MCF 10A (cell line): ENCODE measurements at regions of chr19 and their contacts with region 1.

Region 1: DNA sequence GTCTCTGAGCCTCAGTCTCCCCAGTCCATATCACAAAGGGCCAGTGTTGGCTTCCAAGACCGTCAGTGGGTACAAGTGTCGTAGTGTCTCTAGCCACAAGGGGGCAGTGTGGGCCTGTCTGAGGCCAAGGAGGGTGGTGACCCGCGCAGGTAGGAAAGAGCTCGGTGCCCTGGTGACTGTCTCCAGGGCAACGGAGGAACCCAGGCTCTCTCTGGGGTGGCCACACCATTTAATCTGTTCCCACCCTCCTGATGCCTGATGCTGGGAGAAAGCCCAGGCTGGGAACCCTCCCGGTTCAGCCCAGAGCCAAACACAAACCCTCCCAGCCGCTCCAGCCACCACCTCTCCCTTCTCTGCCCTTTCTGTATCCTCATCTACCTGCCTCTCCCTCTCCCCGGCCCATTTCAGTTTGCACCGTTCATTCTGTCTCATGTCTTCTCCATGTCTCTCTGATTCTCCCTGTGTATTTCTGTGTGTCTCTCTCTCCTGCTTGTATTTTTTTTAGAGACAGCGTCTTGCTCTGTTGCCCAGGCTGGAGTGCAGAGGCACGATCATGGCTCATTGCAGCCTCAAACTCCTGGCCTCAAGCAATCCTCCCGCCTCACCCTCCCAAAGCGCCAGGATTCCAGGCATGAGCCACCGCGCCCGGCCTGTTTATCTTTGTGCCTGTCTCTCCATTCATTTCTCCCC is 17.5 kb upstream of the MEIS3 start:
- DNase-seq: peak; percentile 81
- H3K4me3 Mint-ChIP-seq: no peak overlapping the region
- H3K27ac Mint-ChIP-seq: no peak overlapping the region
- H3K4me1 Mint-ChIP-seq: no peaks in the 10 kb centered on the region
- H3K27me3 Mint-ChIP-seq: peaks cover 39% of the 10 kb centered on the region
- CTCF ChIP-seq: peak; percentile 91

Region 2: DNA sequence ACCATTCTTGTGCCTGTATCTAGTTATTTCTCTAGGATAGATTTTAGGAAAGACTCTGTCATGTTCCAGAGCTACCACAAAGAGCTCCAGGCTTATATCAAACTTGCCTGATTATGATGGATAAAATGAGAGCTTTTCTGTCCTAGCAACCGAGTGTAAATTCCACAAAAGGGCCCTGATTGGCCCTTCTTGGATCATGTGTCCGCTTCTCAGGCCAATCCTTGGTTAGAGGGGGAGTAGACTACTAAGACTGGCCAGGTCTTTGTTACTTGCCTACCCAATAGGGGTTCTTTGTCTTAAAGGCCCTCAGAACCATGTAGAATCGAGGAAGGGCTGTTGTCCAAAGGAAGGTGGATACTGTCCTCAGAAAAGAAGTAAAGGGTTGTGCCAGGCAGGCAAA is 85.3 kb before region 1 on chr19:
- CTCF ChIA-PET with region 1: no interaction called
- POLR2A ChIA-PET with region 1: no interaction called
- intact Hi-C with region 1: no loop called
- DNase-seq: peak; percentile 58
- H3K4me3 Mint-ChIP-seq: no peak overlapping the region
- H3K27ac Mint-ChIP-seq: peak overlapping the region; percentile 54
- H3K4me1 Mint-ChIP-seq: peaks cover 18% of the 10 kb centered on the region
- H3K27me3 Mint-ChIP-seq: no peaks in the 10 kb centered on the region
- CTCF ChIP-seq: no peak

Region 3: DNA sequence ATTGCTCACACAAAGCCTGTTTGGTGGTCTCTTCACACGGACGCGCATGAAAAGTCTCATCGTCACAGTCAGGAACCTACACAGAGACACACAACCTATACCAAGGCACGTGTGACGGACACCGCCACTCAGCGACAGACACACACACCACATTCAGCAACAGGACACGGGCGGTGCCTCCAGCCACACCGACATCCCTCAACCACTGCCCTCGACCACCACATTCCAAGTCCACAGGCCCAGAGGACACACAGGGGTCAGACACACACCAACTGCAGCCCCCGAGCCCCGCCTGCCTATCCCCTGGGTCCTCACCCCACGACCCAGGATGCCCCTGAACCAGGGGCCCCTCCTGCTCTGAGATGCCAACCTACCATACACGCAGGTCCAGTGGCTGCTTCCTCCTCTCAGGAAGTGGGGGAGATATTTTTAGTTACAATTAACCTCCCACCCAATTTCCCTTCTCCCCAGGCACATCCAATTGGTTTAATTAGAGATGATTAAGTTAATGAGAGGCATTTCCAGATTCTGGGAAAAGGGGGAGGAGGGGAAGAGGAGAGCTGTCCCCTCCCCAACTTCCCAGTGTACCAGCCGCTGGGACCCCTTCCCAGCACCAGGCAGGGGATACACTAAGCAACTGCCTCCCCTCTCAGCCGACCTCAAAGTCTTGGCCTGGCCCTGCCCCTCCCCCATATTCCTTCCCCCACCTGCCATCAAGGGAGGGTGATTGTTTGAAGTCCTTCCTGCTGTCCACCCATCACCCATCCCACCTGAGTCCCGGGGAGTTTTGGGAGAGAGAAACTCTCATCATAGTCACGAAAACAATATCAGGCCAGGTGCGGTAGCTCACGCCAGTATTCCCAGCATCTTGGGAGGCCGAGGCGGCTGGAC is 37.9 kb before region 1 on chr19:
- CTCF ChIA-PET with region 1: no interaction called
- POLR2A ChIA-PET with region 1: no interaction called
- intact Hi-C with region 1: no loop called
- DNase-seq: no peak
- H3K4me3 Mint-ChIP-seq: no peak overlapping the region
- H3K27ac Mint-ChIP-seq: no peak overlapping the region
- H3K4me1 Mint-ChIP-seq: peaks cover 5% of the 10 kb centered on the region
- H3K27me3 Mint-ChIP-seq: peaks cover 19% of the 10 kb centered on the region
- CTCF ChIP-seq: no peak

Region 4: GRCh38 chr19:47471733-47472457 is 35.0 kb after region 1 on chr19 and contains the start of gene SLC8A2:
- CTCF ChIA-PET with region 1: interaction called, 11 read pairs
- POLR2A ChIA-PET with region 1: interaction called, 3 read pairs
- intact Hi-C with region 1: no loop called
- DNase-seq: peak; percentile 56
- H3K4me3 Mint-ChIP-seq: no peak within 1 kb of the TSS
- H3K27ac Mint-ChIP-seq: peak within 1 kb of the TSS; percentile 13
- H3K4me1 Mint-ChIP-seq: peaks cover 7% of the 10 kb centered on the region
- H3K27me3 Mint-ChIP-seq: peaks cover 49% of the 10 kb centered on the region
- CTCF ChIP-seq: no peak
- total RNA-seq, gene SLC8A2: 0.54 TPM in 1 of 2 replicates, not detected in the other

Region 5: GRCh38 chr19:47514869-47515588 is 78.2 kb after region 1 on chr19 and contains the start of gene NAPA:
- CTCF ChIA-PET with region 1: interaction called, 8 read pairs
- POLR2A ChIA-PET with region 1: interaction called, 4 read pairs
- intact Hi-C with region 1: loop called (anchors 1 kb)
- DNase-seq: peak; percentile 100
- H3K4me3 Mint-ChIP-seq: peak within 1 kb of the TSS; percentile 99
- H3K27ac Mint-ChIP-seq: peak within 1 kb of the TSS; percentile 100
- H3K4me1 Mint-ChIP-seq: peaks cover 39% of the 10 kb centered on the region
- H3K27me3 Mint-ChIP-seq: no peaks in the 10 kb centered on the region
- CTCF ChIP-seq: no peak
- total RNA-seq, gene NAPA: 72.1 and 73.2 TPM in 2 replicates

Region 6: GRCh38 chr19:47687906-47688305 is 251.0 kb after region 1 on chr19:
- CTCF ChIA-PET with region 1: interaction called, 14 read pairs
- POLR2A ChIA-PET with region 1: no interaction called
- intact Hi-C with region 1: no loop called
- DNase-seq: no peak
- H3K4me3 Mint-ChIP-seq: no peak overlapping the region
- H3K27ac Mint-ChIP-seq: no peak overlapping the region
- H3K4me1 Mint-ChIP-seq: no peaks in the 10 kb centered on the region
- H3K27me3 Mint-ChIP-seq: no peaks in the 10 kb centered on the region
- CTCF ChIP-seq: no peak

Region 7: GRCh38 chr19:47707135-47707925 is 270.5 kb after region 1 on chr19:
- CTCF ChIA-PET with region 1: interaction called, 127 read pairs
- POLR2A ChIA-PET with region 1: interaction called, 4 read pairs
- intact Hi-C with region 1: no loop called
- DNase-seq: peak; percentile 88
- H3K4me3 Mint-ChIP-seq: no peak overlapping the region
- H3K27ac Mint-ChIP-seq: no peak overlapping the region
- H3K4me1 Mint-ChIP-seq: no peaks in the 10 kb centered on the region
- H3K27me3 Mint-ChIP-seq: no peaks in the 10 kb centered on the region
- CTCF ChIP-seq: peak; percentile 77